Breast epithelium (tissue), 4 donors: ENCODE measurements at regions of chr16 and their contacts with region 1.

Region 1: GRCh38 chr16:75486676-75487313 is 8.4 kb downstream of the CHST6 start:
- DNase-seq: no peak
- H3K4me3 ChIP-seq: no peak overlapping the region
- H3K27ac ChIP-seq: no peak overlapping the region
- H3K4me1 ChIP-seq: no peaks in the 10 kb centered on the region
- H3K27me3 ChIP-seq: no peaks in the 10 kb centered on the region
- CTCF ChIP-seq: no peak
- POLR2A ChIP-seq: no peak

Region 2: DNA sequence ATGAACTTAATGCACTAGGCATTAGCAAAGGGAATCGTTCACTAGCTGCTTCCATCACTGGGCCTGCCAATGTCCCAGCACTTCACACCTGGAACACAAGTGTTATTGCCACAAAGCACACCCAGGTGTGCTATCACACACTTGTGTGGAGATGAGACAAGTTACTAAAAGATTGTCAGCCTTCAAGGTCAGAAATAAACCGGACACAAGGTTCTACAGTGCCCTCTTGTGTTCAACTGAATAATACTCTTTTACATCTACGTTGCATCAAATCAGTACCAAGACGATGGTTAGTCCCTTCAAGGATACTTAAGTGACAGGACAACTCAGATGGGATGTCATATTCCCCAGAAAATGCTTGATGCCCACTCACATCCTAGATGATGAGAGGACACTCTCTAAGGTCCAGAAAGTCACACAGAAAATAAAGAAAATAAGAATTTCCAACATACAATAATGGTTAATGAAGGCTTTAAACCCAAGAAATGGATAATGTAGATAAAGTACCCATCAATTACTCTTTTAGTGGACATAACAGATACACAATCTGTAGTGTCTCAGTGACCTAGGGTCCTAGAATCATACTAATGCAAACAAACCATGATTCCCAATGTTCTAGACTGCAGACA is 863.5 kb before region 1 on chr16:
- intact Hi-C with region 1: no loop called
- DNase-seq: no peak
- H3K4me3 ChIP-seq: no peak overlapping the region
- H3K27ac ChIP-seq: no peak overlapping the region
- H3K4me1 ChIP-seq: no peaks in the 10 kb centered on the region
- H3K27me3 ChIP-seq: no peaks in the 10 kb centered on the region
- CTCF ChIP-seq: peak in 1 of 3 donors; percentile 43
- POLR2A ChIP-seq: no peak

Region 3: DNA sequence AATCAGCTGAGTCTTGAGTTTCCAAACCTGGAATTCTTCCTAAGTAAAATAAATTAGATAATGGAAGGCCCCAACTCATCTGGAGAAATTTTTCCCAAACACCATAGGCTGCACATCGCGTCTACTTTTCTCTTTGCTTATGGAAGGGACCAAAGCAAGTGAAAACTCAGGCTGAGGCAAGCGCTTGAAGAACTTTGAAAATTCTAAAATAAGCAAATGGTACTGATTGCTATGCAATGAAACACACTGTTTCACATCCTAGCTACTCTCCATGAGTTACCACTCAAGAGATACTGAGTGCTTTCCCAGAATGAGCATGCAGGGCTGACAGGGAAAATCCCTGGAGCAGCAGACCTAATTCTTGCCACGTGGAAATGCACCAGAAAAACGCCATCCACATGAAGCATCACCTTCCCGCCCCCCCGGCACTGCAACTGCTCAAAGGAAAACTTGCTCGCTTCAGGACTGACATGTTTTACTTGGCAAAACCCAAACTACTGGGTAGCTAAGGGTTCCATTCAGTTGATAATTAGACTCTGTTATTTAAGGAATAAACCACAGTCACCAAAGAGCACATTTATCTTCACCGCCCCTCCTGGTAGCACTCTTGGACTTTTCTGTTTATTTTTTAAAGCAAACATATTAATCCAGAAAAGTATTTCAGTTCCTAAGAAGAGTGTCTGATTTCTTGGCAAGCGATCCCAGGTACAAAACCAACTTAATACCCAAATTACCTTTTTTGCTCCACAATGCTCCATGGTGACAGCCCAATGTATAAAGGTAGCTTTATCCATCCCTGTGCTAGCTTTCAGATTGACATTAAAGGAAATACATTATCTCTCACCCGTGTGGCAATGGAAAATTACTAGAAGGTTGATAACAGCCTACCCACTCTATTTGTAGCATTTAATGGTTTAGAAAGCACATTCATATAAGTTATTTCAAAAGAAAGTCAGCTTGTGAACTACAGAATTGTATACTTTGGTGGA is 564.4 kb before region 1 on chr16:
- intact Hi-C with region 1: loop called (anchors 5 kb)
- DNase-seq: no peak
- H3K4me3 ChIP-seq: no peak overlapping the region
- H3K27ac ChIP-seq: no peak overlapping the region
- H3K4me1 ChIP-seq: no peaks in the 10 kb centered on the region
- H3K27me3 ChIP-seq: no peaks in the 10 kb centered on the region
- CTCF ChIP-seq: no peak
- POLR2A ChIP-seq: no peak

Region 4: GRCh38 chr16:75192601-75193297 is 294.0 kb before region 1 on chr16:
- intact Hi-C with region 1: no loop called
- DNase-seq: peak in 1 of 2 donors; percentile 31
- H3K4me3 ChIP-seq: no peak overlapping the region
- H3K27ac ChIP-seq: no peak overlapping the region
- H3K4me1 ChIP-seq: no peaks in the 10 kb centered on the region
- H3K27me3 ChIP-seq: no peaks in the 10 kb centered on the region
- CTCF ChIP-seq: no peak
- POLR2A ChIP-seq: no peak

Region 5: GRCh38 chr16:75206749-75207451 is 279.9 kb before region 1 on chr16 and contains the start of gene CTRB2:
- intact Hi-C with region 1: no loop called
- DNase-seq: peak in 1 of 2 donors; percentile 30
- H3K4me3 ChIP-seq: no peak within 1 kb of the TSS
- H3K27ac ChIP-seq: no peak within 1 kb of the TSS
- H3K4me1 ChIP-seq: no peaks in the 10 kb centered on the region
- H3K27me3 ChIP-seq: no peaks in the 10 kb centered on the region
- CTCF ChIP-seq: no peak
- POLR2A ChIP-seq: no peak
- total RNA-seq, gene CTRB2: not detected

Region 6: GRCh38 chr16:75432828-75433731 is 53.7 kb before region 1 on chr16 and contains the start of gene CFDP1:
- intact Hi-C with region 1: loop called (anchors 2 kb)
- DNase-seq: peak; percentile 95 to 97
- H3K4me3 ChIP-seq: peak within 1 kb of the TSS; percentile 71 to 99 (median 88)
- H3K27ac ChIP-seq: peak within 1 kb of the TSS; percentile 96 to 99
- H3K4me1 ChIP-seq: no peaks in the 10 kb centered on the region
- H3K27me3 ChIP-seq: no peaks in the 10 kb centered on the region
- CTCF ChIP-seq: no peak
- POLR2A ChIP-seq: peak; percentile 61
- total RNA-seq, gene CFDP1: 55.5 to 81.9 (median 80.9) TPM

Region 7: GRCh38 chr16:75464130-75464918 is 22.5 kb before region 1 on chr16 and contains the start of gene TMEM170A:
- intact Hi-C with region 1: no loop called
- DNase-seq: peak; percentile 100
- H3K4me3 ChIP-seq: peak within 1 kb of the TSS; percentile 76 to 93 (median 84)
- H3K27ac ChIP-seq: peak within 1 kb of the TSS; percentile 95
- H3K4me1 ChIP-seq: no peaks in the 10 kb centered on the region
- H3K27me3 ChIP-seq: no peaks in the 10 kb centered on the region
- CTCF ChIP-seq: peak; percentile 100
- POLR2A ChIP-seq: peak; percentile 72
- total RNA-seq, gene TMEM170A: 12.8 to 36.3 (median 22.0) TPM